HCT116 (cell line): ENCODE measurements at regions of chr5 and their contacts with region 1.

Region 1: DNA sequence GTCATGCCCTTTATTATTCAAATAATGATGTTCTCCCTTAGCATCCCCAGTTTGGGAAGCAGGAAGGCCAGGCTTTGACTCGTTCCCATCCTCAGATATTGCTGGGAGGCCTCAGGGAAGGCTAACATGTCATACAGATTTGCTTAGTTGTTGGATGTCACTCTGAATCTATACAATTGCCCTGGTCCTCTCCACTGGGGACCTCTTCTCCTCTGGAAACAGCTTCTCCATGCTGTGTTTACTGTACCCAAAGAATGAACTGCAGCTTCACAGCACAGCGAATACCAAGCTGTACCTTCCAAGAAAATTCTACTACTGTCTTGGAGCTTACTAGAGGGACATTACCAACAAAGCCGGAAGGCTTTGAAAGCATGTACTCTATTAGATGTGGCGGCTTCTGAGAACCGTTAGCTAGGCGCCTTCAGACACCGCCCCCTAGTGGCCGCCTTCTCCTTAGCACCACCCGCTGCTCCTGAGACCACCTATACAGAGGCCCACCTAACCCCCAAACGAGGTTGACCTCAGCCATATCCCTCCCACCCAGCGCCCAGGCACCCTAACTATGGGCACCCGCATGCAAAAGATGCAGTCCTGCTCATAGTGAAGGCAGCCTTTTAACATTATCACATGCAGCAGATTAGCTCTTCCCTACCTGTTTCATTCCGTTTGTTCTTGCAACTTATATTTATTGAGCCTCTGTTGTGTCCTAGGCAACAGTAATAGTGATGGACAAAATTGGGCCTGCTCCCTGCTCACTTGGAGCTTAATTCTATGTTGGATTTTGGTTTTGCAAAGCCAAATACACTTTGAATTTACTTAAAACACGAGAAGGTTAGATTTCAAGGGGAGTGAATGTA is 34.9 kb upstream of the FOXI1 start:
- DNase-seq: peak; percentile 16
- ATAC-seq: peak; percentile 93
- H3K4me3 ChIP-seq: no peak overlapping the region
- H3K27ac ChIP-seq: no peak overlapping the region
- H3K4me1 ChIP-seq: no peaks in the 10 kb centered on the region
- H3K27me3 ChIP-seq: peaks cover 53% of the 10 kb centered on the region
- CTCF ChIP-seq: peak; percentile 15 to 85 (median 81); a peak in 5 of 6 replicates
- POLR2A ChIP-seq: no peak
- RAD21 ChIP-seq: peak; percentile 44

Region 2: GRCh38 chr5:169094584-169095409 is 976.0 kb before region 1 on chr5:
- CTCF ChIA-PET with region 1: no interaction called
- POLR2A ChIA-PET with region 1: no interaction called
- RAD21 ChIA-PET with region 1: no interaction called
- intact Hi-C with region 1: no loop called
- DNase-seq: no peak
- ATAC-seq: no peak
- H3K4me3 ChIP-seq: no peak overlapping the region
- H3K27ac ChIP-seq: no peak overlapping the region
- H3K4me1 ChIP-seq: peaks cover 0 to 6% of the 10 kb centered on the region in 2 experiments; a peak in 2 of 4 replicates
- H3K27me3 ChIP-seq: peaks cover 28% of the 10 kb centered on the region
- CTCF ChIP-seq: no peak
- POLR2A ChIP-seq: no peak
- RAD21 ChIP-seq: no peak

Region 3: DNA sequence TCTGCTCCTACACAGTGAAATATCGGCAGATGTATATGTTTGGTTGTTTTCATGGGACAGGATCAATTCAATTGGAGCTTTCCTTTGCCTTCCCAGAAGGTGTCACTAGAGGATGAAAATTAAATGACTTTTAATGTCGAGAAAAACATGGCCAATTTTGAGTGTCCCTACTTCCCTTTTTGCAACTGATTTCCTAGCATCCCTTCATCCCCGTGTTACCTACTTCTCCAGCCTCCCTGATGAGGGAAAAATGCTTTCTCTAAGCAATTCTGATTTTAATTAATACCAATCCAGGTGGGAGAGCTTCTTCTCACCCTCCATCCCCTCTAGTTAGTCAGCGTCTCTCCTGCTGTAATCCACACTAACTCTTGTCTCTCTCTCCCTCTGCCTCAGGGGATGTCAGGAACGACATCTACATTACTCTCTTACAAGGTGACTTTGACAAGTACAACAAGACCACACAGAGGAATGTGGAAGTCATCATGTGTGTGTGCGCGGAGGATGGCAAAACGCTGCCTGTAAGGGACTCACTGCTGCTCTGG is 368.8 kb before region 1 on chr5:
- CTCF ChIA-PET with region 1: interaction called, 5 read pairs
- POLR2A ChIA-PET with region 1: no interaction called
- RAD21 ChIA-PET with region 1: no interaction called
- intact Hi-C with region 1: loop called (anchors 2 kb)
- DNase-seq: no peak
- ATAC-seq: peak; percentile 61
- H3K4me3 ChIP-seq: no peak overlapping the region
- H3K27ac ChIP-seq: no peak overlapping the region
- H3K4me1 ChIP-seq: peaks cover 0 to 6% of the 10 kb centered on the region in 2 experiments; a peak in 2 of 4 replicates
- H3K27me3 ChIP-seq: peaks cover 10% of the 10 kb centered on the region
- CTCF ChIP-seq: peak; percentile 20 to 40 (median 29); a peak in 3 of 6 replicates
- POLR2A ChIP-seq: no peak
- RAD21 ChIP-seq: peak; percentile 45

Region 4: GRCh38 chr5:169895926-169896325 is 174.9 kb before region 1 on chr5:
- CTCF ChIA-PET with region 1: no interaction called
- POLR2A ChIA-PET with region 1: no interaction called
- RAD21 ChIA-PET with region 1: no interaction called
- intact Hi-C with region 1: no loop called
- DNase-seq: no peak
- ATAC-seq: no peak
- H3K4me3 ChIP-seq: no peak overlapping the region
- H3K27ac ChIP-seq: no peak overlapping the region
- H3K4me1 ChIP-seq: no peaks in the 10 kb centered on the region
- H3K27me3 ChIP-seq: peaks cover 43% of the 10 kb centered on the region
- CTCF ChIP-seq: no peak
- POLR2A ChIP-seq: no peak
- RAD21 ChIP-seq: no peak

Region 5: GRCh38 chr5:170059221-170059620 is 11.6 kb before region 1 on chr5:
- CTCF ChIA-PET with region 1: interaction called, 13 read pairs
- POLR2A ChIA-PET with region 1: no interaction called
- RAD21 ChIA-PET with region 1: no interaction called
- intact Hi-C with region 1: no loop called
- DNase-seq: no peak
- ATAC-seq: no peak
- H3K4me3 ChIP-seq: no peak overlapping the region
- H3K27ac ChIP-seq: no peak overlapping the region
- H3K4me1 ChIP-seq: no peaks in the 10 kb centered on the region
- H3K27me3 ChIP-seq: peaks cover 71% of the 10 kb centered on the region
- CTCF ChIP-seq: no peak
- POLR2A ChIP-seq: no peak
- RAD21 ChIP-seq: no peak

Region 6: GRCh38 chr5:170348137-170348633 is 277.4 kb after region 1 on chr5:
- CTCF ChIA-PET with region 1: no interaction called
- POLR2A ChIA-PET with region 1: no interaction called
- RAD21 ChIA-PET with region 1: no interaction called
- intact Hi-C with region 1: loop called (anchors 1 kb)
- DNase-seq: no peak
- ATAC-seq: no peak
- H3K4me3 ChIP-seq: no peak overlapping the region
- H3K27ac ChIP-seq: no peak overlapping the region
- H3K4me1 ChIP-seq: no peaks in the 10 kb centered on the region
- H3K27me3 ChIP-seq: peaks cover 85% of the 10 kb centered on the region
- CTCF ChIP-seq: no peak
- POLR2A ChIP-seq: no peak
- RAD21 ChIP-seq: no peak